B cell (primary cell): ENCODE measurements at regions of chr7 and their contacts with region 1.

Region 1: GRCh38 chr7:151226875-151227782 is at the start of gene ABCF2:
- DNase-seq: peak; percentile 97
- ATAC-seq: peak; percentile 99
- H3K4me3 ChIP-seq: peak within 1 kb of the TSS; percentile 60 to 97 (median 81)
- H3K4me3 Mint-ChIP-seq: peak within 1 kb of the TSS; percentile 95
- H3K27ac ChIP-seq: peak within 1 kb of the TSS; percentile 39 to 73
- H3K27ac Mint-ChIP-seq: peak within 1 kb of the TSS; percentile 92
- H3K4me1 ChIP-seq: peaks cover 23 to 26% of the 10 kb centered on the region in 2 donors
- H3K4me1 Mint-ChIP-seq: peaks cover 48% of the 10 kb centered on the region
- H3K27me3 ChIP-seq: no peaks in the 10 kb centered on the region
- H3K27me3 Mint-ChIP-seq: no peaks in the 10 kb centered on the region
- CTCF ChIP-seq: no peak
- total RNA-seq, gene ABCF2: 27.1 and 30.2 TPM in 2 replicates

Region 2: GRCh38 chr7:149838224-149838947 is 1388.7 kb before region 1 on chr7 and contains the start of gene ZNF862:
- CTCF ChIA-PET with region 1: no interaction called
- POLR2A ChIA-PET with region 1: no interaction called
- intact Hi-C with region 1: loop called (anchors 1 kb)
- DNase-seq: peak; percentile 97
- ATAC-seq: peak; percentile 95
- H3K4me3 ChIP-seq: peak within 1 kb of the TSS; percentile 60 to 88 (median 73)
- H3K4me3 Mint-ChIP-seq: peak within 1 kb of the TSS; percentile 96
- H3K27ac ChIP-seq: peak within 1 kb of the TSS; percentile 51 to 77
- H3K27ac Mint-ChIP-seq: peak within 1 kb of the TSS; percentile 93
- H3K4me1 ChIP-seq: peaks cover 13 to 15% of the 10 kb centered on the region in 2 donors
- H3K4me1 Mint-ChIP-seq: peaks cover 19% of the 10 kb centered on the region
- H3K27me3 ChIP-seq: no peaks in the 10 kb centered on the region
- H3K27me3 Mint-ChIP-seq: peaks cover 22% of the 10 kb centered on the region
- CTCF ChIP-seq: no peak
- total RNA-seq, gene ZNF862: 24.3 and 33.0 TPM in 2 replicates

Region 3: DNA sequence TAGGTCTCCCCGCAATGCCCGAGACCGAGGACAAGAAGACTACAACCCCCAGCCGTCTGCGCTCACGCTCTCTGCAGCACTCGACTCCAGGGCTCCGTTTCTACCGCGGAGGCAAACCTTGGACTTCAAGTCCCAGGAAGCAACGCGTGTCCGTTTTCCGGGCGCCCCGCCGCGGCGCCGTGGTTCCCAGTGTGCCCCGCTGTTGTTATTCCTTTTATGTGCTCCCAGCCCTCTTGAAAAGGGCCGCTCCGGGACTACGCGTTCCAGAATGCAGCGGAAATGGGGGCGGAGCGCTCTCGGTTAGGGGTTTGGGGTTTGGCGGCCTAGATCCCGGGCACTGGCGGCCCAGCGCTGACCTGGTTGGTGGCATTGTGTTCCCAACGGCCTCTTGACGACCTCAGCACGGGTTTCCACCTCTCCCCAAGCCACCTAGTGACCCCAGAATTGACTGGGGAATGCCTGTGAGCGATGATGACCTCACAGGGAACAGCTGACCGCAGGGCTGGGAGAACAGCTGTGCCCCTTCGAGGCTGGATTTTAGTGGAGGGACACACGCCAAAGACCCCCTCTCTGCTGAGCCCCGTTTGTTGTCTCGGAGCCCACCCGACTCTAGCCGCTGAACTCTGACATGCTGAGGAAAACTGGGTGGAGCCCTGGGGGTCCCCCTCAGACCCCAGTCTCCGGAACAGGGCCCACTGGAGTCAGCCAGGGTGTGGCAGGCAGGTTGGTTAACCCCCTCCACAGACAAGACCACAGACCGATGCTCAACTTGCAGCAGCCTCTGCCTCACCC is 168.9 kb before region 1 on chr7:
- CTCF ChIA-PET with region 1: no interaction called
- POLR2A ChIA-PET with region 1: no interaction called
- intact Hi-C with region 1: loop called (anchors 1 kb)
- DNase-seq: peak; percentile 98
- ATAC-seq: peak; percentile 92
- H3K4me3 ChIP-seq: peak overlapping the region; percentile 67 to 90 (median 73)
- H3K4me3 Mint-ChIP-seq: peak overlapping the region; percentile 96
- H3K27ac ChIP-seq: peak overlapping the region; percentile 79 to 82
- H3K27ac Mint-ChIP-seq: peak overlapping the region; percentile 94
- H3K4me1 ChIP-seq: peaks cover 23 to 40% of the 10 kb centered on the region in 2 donors
- H3K4me1 Mint-ChIP-seq: peaks cover 36% of the 10 kb centered on the region
- H3K27me3 ChIP-seq: no peaks in the 10 kb centered on the region
- H3K27me3 Mint-ChIP-seq: no peaks in the 10 kb centered on the region
- CTCF ChIP-seq: no peak

Region 4: DNA sequence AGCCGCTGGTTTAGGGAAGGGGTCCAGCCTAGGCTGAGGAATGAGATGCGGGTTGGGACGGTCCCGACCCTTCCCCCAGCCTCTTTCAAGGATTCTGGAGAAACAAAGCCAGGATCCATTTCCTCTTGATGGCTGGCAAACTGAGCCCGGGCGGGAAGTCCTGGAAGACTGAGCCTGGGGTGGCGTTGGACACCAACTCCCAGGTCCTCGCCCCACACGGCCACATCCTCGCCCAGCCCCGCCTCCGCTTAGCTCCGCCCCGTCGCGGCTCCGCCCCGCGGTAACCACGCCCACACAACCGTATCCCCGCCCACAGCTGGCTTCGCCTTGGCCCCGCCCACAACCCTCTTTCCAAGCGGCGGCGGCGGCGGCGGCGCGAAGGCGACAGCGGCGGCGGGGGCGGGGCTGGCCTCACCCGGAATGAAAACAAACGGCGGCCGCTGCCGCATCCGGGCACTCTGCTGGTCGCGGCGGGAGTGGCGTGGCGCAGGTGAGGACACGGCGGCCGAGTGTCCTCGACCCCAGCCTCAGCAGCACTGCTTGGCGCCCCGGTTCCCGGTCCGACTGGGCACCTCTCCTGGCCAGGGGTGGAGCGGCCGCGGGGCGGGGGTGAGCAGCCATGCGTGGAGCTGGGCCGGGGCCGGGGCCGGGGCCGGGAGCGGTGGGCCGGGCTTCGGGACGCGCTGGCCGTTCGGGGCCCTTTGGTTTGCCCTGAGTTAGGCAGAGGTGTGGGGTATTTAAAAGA is 114.4 kb after region 1 on chr7 and contains the start of gene NUB1:
- CTCF ChIA-PET with region 1: no interaction called
- POLR2A ChIA-PET with region 1: interaction called, 3 read pairs
- intact Hi-C with region 1: loop called (anchors 1 kb)
- DNase-seq: peak; percentile 93
- ATAC-seq: peak; percentile 95
- H3K4me3 ChIP-seq: peak within 1 kb of the TSS; percentile 62 to 100 (median 84)
- H3K4me3 Mint-ChIP-seq: peak within 1 kb of the TSS; percentile 88
- H3K27ac ChIP-seq: peak within 1 kb of the TSS; percentile 79 to 80
- H3K27ac Mint-ChIP-seq: peak within 1 kb of the TSS; percentile 95
- H3K4me1 ChIP-seq: peaks cover 29 to 36% of the 10 kb centered on the region in 2 donors
- H3K4me1 Mint-ChIP-seq: peaks cover 36% of the 10 kb centered on the region
- H3K27me3 ChIP-seq: no peaks in the 10 kb centered on the region
- H3K27me3 Mint-ChIP-seq: no peaks in the 10 kb centered on the region
- CTCF ChIP-seq: no peak
- total RNA-seq, gene NUB1: 95.4 and 104 TPM in 2 replicates

Region 5: DNA sequence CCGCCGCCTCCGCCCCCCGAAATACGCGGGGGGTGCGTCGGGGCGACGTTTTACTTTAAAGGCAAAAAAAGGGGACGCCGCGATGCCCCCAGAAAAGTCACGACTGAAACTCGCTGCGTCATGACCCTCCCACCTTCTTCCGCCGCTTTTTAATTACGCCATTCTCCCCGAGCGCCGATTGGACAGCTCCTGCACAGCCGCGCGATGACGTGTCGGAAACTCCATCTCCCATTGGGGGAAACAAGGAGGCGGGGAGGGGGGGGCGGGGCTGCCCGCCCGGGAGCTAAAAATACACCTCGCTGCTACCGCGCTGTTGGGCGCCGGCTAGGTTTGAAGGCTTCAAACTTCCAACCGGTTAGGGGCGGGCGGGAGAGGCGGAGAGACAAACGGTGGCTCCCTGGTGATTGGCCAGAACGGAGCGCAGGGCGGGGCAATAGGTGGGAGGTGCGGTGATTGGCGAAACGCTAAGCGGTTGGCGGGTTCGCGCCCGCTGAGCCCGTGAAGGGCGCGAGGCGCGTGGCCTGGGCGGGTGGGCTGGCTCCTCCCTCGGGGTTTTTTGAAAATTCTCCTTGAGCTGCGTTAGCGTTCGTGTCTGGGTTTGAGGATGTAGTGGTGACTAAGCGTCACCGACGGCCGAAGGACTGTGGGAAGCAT is 292.8 kb after region 1 on chr7 and contains the start of gene RHEB:
- CTCF ChIA-PET with region 1: no interaction called
- POLR2A ChIA-PET with region 1: no interaction called
- intact Hi-C with region 1: loop called (anchors 1 kb)
- DNase-seq: peak; percentile 99
- ATAC-seq: peak; percentile 81
- H3K4me3 ChIP-seq: peak within 1 kb of the TSS; percentile 63 to 79 (median 74)
- H3K4me3 Mint-ChIP-seq: peak within 1 kb of the TSS; percentile 82
- H3K27ac ChIP-seq: peak within 1 kb of the TSS; percentile 78 to 93
- H3K27ac Mint-ChIP-seq: peak within 1 kb of the TSS; percentile 95
- H3K4me1 ChIP-seq: peaks cover 18 to 27% of the 10 kb centered on the region in 2 donors
- H3K4me1 Mint-ChIP-seq: peaks cover 37% of the 10 kb centered on the region
- H3K27me3 ChIP-seq: peaks cover 0 to 4% (median 2%) of the 10 kb centered on the region in 4 experiments
- H3K27me3 Mint-ChIP-seq: peaks cover 3% of the 10 kb centered on the region
- CTCF ChIP-seq: no peak
- total RNA-seq, gene RHEB: 32.0 and 40.3 TPM in 2 replicates